Activated naive CD4-positive, alpha-beta T cell treated with anti-CD3 and anti-CD28 coated beads for 36 hours (primary cell): ENCODE measurements at regions of chr1 and their contacts with region 1.

Region 1: DNA sequence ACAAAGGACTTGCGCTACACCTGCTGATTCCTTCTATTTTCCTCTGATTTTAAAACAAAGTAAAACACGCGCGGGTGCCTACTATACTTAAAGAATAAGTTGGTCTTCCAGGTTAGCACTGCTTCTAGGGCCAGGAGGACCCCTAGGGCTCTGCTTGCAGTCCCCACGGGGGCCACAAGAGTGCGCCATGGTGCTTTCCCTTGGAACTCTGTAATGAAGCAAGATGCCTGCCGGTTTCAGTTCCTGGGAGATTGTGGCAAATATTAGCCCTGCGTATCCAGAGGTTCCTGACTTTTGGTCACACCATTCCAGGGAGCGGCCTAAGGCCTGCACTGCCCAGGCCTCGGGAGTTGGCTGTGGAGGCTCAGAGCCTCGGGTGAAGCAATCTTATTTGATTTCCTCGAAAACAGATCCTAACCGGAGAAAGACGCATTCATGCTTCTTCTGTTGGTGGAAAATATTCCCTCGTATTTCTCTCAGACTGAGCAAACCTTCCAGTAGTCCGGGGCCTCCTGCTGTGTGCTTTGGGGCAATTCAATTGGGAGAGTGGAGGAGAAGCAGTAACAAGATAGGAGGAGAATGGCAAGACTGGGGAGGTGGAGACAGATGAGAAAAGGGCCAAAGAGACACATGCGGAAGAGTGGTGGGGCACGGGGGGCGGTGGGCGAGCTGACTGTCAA is 25.3 kb downstream of the ADAM30 start:
- DNase-seq: peak; percentile 78
- H3K4me3 Mint-ChIP-seq: no peak overlapping the region
- H3K27ac Mint-ChIP-seq: no peak overlapping the region
- H3K4me1 Mint-ChIP-seq: no peaks in the 10 kb centered on the region
- H3K27me3 Mint-ChIP-seq: peaks cover 6% of the 10 kb centered on the region

Region 2: DNA sequence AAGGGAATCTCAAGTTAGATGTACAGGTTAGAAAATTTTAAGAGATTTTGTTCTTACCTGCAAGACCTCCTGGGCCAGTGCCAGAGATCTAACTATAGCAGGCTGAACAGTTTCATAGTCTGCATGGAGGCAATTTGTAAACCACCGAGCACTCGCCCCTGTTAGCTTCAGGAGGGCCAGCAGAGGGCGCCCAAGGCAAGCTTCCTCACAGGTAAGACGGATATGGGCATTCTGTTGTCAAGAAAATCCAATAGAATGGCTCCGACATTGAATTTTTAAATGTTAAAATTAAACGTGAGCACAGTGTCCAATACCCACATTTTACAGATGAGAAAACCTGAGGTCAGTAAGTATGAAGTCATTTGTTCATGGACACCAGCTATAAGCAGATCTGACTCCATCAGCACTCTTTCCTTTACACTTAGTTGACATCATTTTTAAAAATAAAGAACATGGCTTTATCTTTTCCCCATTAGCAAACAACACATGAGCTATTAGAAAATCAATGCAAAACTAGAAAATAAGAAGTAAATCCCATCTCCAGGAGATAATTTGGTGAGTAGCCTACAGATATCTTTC is 62.0 kb before region 1 on chr1:
- CTCF ChIA-PET with region 1: interaction called, 9 read pairs
- intact Hi-C with region 1: loop called (anchors 5 kb)
- DNase-seq: peak; percentile 82
- H3K4me3 Mint-ChIP-seq: no peak overlapping the region
- H3K27ac Mint-ChIP-seq: no peak overlapping the region
- H3K4me1 Mint-ChIP-seq: peaks cover 3% of the 10 kb centered on the region
- H3K27me3 Mint-ChIP-seq: peaks cover 2% of the 10 kb centered on the region

Region 3: GRCh38 chr1:119859647-119860046 is 11.4 kb before region 1 on chr1:
- CTCF ChIA-PET with region 1: interaction called, 15 read pairs
- intact Hi-C with region 1: no loop called
- DNase-seq: peak; percentile 26
- H3K4me3 Mint-ChIP-seq: no peak overlapping the region
- H3K27ac Mint-ChIP-seq: no peak overlapping the region
- H3K4me1 Mint-ChIP-seq: peaks cover 12% of the 10 kb centered on the region
- H3K27me3 Mint-ChIP-seq: peaks cover 9% of the 10 kb centered on the region

Region 4: DNA sequence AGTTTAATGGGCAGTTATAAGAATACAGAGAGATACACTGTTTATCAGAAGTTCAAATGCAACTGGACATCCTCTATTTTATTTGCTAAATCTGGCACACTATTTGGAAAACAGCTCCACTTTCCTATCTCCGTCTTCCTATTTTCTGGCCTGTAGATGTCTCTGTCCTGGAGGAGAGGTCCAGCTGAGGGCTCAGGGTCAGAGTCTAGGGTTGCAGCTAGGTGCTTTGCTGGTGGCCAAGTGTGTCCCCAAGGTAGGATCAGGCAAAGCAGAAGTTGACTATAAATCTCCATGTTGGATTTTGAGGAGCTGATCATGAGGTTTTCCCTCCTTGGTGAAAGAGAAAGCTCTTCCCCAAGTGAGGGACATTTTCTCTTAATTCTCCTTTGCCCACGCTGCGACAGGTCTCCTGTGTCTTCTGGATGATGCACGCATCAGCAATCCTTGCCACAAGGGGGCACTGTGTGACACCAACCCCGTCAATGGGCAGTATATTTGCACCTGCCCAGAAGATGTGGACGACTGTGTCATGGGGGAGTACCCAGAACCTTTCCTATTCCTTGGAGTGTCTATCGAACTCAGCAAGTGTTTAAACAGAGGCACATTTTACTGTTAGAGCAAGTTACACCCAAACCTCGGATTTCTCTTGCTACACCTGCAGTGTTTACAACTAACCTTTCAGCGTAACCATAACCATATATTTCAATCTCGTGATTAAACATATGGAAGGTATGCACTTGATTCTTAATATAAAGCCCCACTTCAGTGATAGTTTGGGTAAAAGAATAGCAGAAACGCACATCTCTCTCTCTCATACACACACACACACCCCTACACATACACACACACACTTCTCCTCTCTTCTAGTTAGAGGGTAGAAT is 15.1 kb after region 1 on chr1:
- CTCF ChIA-PET with region 1: interaction called, 16 read pairs
- intact Hi-C with region 1: no loop called
- DNase-seq: peak; percentile 76
- H3K4me3 Mint-ChIP-seq: no peak overlapping the region
- H3K27ac Mint-ChIP-seq: no peak overlapping the region
- H3K4me1 Mint-ChIP-seq: no peaks in the 10 kb centered on the region
- H3K27me3 Mint-ChIP-seq: peaks cover 9% of the 10 kb centered on the region